ENCODE measurements at regions of chr12 and their contacts with region 1.

Region 1: GRCh38 chr12:56315622-56316473 is at the start of gene CNPY2:
- DNase-seq: peak; percentile 98
- H3K4me3 ChIP-seq: peak within 1 kb of the TSS; percentile 15 to 70 (median 57)
- H3K27ac ChIP-seq: peak within 1 kb of the TSS; percentile 63
- H3K4me1 ChIP-seq: peaks cover 9% of the 10 kb centered on the region
- H3K27me3 ChIP-seq: no peaks in the 10 kb centered on the region
- CTCF ChIP-seq: peak in 1 of 2 donors; percentile 23
- POLR2A ChIP-seq: peak; percentile 64
- total RNA-seq, gene CNPY2: 166 and 183 TPM in 2 replicates

Region 2: DNA sequence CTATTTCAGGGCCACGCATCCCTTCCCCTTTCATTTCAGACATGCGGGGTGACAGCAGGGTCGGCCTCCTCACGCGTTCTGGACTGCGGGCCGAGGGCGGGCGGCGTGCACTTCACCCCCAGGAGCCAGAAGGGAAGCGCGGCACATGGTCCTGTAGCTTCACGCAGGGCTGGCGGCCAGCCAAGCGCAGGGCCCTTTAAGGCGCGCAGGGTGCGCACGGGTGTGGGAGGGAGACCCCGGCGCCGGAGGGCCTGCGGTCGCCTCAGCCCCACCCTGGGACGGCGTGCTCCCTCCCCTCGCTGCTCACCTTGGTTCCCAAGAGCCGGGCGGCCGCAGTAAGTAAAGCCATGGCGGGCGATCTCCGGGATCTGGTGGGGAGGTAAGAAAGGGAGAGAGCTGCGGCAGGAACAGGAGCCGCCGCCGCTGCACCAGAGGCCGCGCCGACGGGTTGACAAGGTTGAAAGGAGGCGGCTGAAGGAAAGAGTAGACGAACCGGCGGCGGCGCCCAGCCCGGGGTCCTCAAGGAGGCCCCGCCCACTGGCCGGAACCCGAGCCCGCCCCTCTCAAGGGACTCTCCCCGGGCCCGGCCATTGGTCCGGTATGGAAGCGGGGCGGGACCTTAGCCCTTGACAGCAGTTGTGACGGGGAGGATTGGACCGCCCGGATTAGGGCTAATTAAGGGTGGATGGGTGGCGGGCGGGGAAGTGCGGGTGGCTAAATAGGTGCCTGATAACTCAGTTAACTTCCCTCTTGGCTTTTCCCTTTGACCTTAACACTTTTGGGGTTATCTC is 15.8 kb before region 1 on chr12 and contains the start of gene CS:
- CTCF ChIA-PET with region 1: interaction called, 6 read pairs
- POLR2A ChIA-PET with region 1: no interaction called
- dilution Hi-C with region 1: no loop called
- intact Hi-C with region 1: loop called (anchors 1 kb)
- DNase-seq: peak; percentile 96
- H3K4me3 ChIP-seq: peak within 1 kb of the TSS; percentile 2 to 91 (median 88)
- H3K27ac ChIP-seq: peak within 1 kb of the TSS; percentile 77
- H3K4me1 ChIP-seq: peaks cover 26% of the 10 kb centered on the region
- H3K27me3 ChIP-seq: no peaks in the 10 kb centered on the region
- CTCF ChIP-seq: no peak
- POLR2A ChIP-seq: peak; percentile 1
- total RNA-seq, gene CS: 296 and 312 TPM in 2 replicates

Region 3: DNA sequence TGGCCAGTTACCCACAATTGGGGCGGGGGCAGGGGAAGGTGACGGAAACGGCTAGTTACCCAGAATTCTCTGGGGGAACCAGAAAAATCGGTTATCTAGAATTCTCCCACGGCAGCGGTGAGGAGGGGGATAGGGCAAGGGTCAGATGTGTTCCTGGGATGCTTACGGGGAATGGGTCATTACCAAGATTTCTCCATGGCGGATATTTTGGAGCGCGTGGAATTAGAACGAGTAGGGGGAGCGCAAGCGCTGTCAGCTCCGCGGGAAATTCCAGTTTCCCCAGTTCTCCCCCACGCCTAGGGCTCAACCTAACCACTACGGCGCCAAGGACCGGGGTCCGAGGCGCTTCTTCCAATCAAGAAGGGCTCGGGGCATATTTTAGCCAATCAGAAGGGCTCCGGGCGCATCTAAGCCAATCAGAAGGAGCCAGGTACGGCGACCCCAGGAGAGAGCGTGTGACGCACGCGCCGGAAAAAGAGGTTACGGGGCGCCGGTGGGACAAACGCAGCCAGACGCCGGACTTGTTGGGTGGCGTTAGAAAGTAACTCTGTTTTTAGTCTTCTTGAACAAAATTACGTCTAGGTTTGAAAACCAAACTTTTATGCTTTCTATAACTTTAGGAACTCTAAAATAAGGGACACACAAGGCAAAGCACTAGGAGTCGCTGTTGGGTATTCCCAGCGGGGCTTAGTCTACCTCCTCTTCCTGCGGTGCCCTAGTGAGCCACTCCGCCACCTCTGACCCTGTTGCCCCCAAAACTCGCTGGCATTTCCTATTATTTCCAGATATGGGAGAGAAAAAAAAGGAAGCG is 18.0 kb after region 1 on chr12 and contains the start of gene PAN2:
- CTCF ChIA-PET with region 1: interaction called, 8 read pairs
- POLR2A ChIA-PET with region 1: interaction called, 5 read pairs
- dilution Hi-C with region 1: no loop called
- intact Hi-C with region 1: loop called (anchors 1 kb)
- DNase-seq: peak; percentile 97
- H3K4me3 ChIP-seq: peak within 1 kb of the TSS; percentile 45 to 70 (median 49)
- H3K27ac ChIP-seq: peak within 1 kb of the TSS; percentile 97
- H3K4me1 ChIP-seq: peaks cover 16% of the 10 kb centered on the region
- H3K27me3 ChIP-seq: no peaks in the 10 kb centered on the region
- CTCF ChIP-seq: peak; percentile 65 to 66
- POLR2A ChIP-seq: peak; percentile 76
- total RNA-seq, gene PAN2: 21.5 and 24.4 TPM in 2 replicates

Region 4: DNA sequence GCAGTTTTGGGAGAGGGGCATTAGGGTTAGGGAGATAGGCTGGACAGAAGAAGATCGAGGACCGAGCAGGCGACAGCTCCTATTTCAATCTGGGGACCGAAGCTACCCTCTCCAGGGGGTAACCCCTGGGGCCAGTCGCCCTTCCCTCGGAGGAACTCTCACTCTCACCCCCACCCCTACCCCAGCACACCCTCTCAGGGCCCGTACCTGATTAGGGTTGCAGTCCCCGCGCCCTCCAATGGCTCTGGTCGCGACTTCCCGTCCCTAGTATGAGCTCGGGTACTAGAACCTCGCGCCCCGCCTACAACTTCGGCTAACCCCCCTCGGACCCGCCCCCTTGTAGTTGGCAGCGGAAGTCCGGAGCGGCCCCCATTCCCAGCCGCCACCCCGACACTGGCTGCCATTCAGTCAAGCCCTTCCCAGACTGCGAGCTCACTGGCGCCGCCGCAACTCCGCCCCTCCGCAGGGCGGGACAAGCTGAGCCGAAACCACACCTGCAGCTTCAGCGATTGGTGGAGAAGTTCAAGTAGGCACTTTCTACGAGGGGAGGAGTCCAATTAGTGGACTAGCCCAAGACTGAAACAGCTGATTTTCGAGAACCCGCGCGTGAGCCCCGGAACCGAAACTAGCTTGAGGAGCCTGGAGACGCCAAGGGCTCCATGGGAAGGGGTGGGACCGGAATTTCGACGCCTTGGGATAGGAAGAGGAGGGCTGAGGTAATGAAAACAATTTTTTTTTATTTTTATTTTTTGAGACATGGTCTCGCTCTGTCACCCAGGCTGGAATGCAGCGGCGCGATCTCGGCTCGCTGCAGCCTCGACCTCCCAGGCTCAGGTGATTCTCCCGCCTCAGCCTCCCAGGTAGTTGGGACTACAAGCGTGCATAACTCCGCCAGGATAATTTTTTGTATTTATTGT is 44.3 kb after region 1 on chr12 and contains the start of gene STAT2:
- CTCF ChIA-PET with region 1: interaction called, 16 read pairs
- POLR2A ChIA-PET with region 1: interaction called, 8 read pairs
- dilution Hi-C with region 1: no loop called
- intact Hi-C with region 1: loop called (anchors 1 kb)
- DNase-seq: peak; percentile 100
- H3K4me3 ChIP-seq: peak within 1 kb of the TSS; percentile 59 to 92 (median 74)
- H3K27ac ChIP-seq: peak within 1 kb of the TSS; percentile 73
- H3K4me1 ChIP-seq: peaks cover 14% of the 10 kb centered on the region
- H3K27me3 ChIP-seq: no peaks in the 10 kb centered on the region
- CTCF ChIP-seq: no peak
- POLR2A ChIP-seq: peak; percentile 80
- total RNA-seq, gene STAT2: 66.5 and 74.8 TPM in 2 replicates

Region 5: GRCh38 chr12:56448860-56449621 is 133.2 kb after region 1 on chr12 and contains the start of gene TIMELESS:
- CTCF ChIA-PET with region 1: interaction called, 8 read pairs
- POLR2A ChIA-PET with region 1: no interaction called
- dilution Hi-C with region 1: no loop called
- intact Hi-C with region 1: loop called (anchors 1 kb)
- DNase-seq: peak; percentile 94
- H3K4me3 ChIP-seq: peak within 1 kb of the TSS; percentile 53 to 88 (median 77)
- H3K27ac ChIP-seq: peak within 1 kb of the TSS; percentile 61
- H3K4me1 ChIP-seq: peaks cover 20% of the 10 kb centered on the region
- H3K27me3 ChIP-seq: peaks cover 0 to 3% of the 10 kb centered on the region in 2 experiments
- CTCF ChIP-seq: no peak
- POLR2A ChIP-seq: peak; percentile 84
- total RNA-seq, gene TIMELESS: 28.2 and 28.4 TPM in 2 replicates

Region 6: GRCh38 chr12:56461235-56462159 is 145.6 kb after region 1 on chr12:
- CTCF ChIA-PET with region 1: interaction called, 60 read pairs
- POLR2A ChIA-PET with region 1: interaction called, 9 read pairs
- dilution Hi-C with region 1: no loop called
- intact Hi-C with region 1: loop called (anchors 1 kb)
- DNase-seq: no peak
- H3K4me3 ChIP-seq: no peak overlapping the region
- H3K27ac ChIP-seq: no peak overlapping the region
- H3K4me1 ChIP-seq: no peaks in the 10 kb centered on the region
- H3K27me3 ChIP-seq: no peaks in the 10 kb centered on the region
- CTCF ChIP-seq: no peak
- POLR2A ChIP-seq: no peak

Region 7: DNA sequence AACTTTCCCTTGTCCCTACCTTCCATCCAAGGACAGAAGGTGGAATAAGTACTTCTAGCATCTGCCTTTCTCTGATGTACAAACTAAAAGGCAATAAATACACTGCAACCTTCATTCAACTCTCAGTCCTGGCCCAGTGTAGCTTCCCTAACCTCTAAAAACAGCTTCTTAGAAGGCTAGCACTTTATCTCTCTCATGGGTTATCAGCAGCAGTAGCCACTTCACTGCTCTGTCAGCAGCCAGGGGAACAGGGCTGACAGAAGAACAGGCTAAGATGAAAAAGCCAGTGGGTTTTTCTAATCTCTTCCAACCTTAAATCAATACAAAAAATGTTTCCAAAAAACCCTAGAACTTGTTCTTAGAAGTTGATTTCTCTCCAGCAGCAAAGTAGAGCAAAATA is 301.1 kb after region 1 on chr12:
- CTCF ChIA-PET with region 1: no interaction called
- POLR2A ChIA-PET with region 1: no interaction called
- dilution Hi-C with region 1: no loop called
- intact Hi-C with region 1: no loop called
- DNase-seq: no peak
- H3K4me3 ChIP-seq: no peak overlapping the region
- H3K27ac ChIP-seq: no peak overlapping the region
- H3K4me1 ChIP-seq: no peaks in the 10 kb centered on the region
- H3K27me3 ChIP-seq: no peaks in the 10 kb centered on the region
- CTCF ChIP-seq: no peak
- POLR2A ChIP-seq: no peak

Region 8: DNA sequence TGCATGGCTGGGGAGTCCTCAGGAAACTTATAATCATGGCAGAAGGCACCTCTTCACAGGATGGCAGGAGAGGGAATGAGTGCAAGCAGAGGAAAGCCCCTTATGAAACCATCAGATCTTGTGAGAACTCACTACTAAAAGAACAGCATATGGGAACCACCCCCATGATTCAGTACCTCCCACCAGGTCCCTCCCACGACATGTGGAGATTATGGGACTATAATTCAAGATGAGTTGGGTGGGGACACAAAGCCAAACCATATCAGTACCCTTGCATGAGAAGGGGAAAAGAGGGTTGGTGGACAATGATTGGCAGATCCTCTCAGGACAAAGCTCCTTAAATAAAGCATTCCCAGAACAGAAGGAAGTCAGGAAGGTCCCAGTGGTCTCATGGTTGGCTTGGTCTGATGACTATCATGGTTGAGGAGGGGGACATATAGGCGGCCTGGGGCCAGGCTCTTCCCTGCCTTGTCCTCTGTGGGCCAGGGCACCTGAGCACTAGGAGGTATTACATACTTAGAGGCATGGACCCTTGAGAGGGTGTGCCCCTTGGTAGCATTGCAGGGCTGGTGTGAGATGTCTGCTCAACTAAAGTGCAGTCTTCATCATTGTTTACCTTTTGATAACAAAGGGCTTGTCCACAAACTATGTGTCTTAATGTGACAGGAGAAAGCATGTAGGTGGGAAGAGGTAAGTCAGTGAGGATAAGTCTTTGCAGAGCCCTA is 469.5 kb after region 1 on chr12:
- CTCF ChIA-PET with region 1: no interaction called
- POLR2A ChIA-PET with region 1: no interaction called
- dilution Hi-C with region 1: no loop called
- intact Hi-C with region 1: no loop called
- DNase-seq: no peak
- H3K4me3 ChIP-seq: no peak overlapping the region
- H3K27ac ChIP-seq: no peak overlapping the region
- H3K4me1 ChIP-seq: no peaks in the 10 kb centered on the region
- H3K27me3 ChIP-seq: peaks cover 0 to 2% of the 10 kb centered on the region in 2 experiments
- CTCF ChIP-seq: no peak
- POLR2A ChIP-seq: no peak

Measured in endothelial cell of umbilical vein (primary cell).